ENCODE measurements at regions of chr6 and their contacts with region 1.

Region 1: DNA sequence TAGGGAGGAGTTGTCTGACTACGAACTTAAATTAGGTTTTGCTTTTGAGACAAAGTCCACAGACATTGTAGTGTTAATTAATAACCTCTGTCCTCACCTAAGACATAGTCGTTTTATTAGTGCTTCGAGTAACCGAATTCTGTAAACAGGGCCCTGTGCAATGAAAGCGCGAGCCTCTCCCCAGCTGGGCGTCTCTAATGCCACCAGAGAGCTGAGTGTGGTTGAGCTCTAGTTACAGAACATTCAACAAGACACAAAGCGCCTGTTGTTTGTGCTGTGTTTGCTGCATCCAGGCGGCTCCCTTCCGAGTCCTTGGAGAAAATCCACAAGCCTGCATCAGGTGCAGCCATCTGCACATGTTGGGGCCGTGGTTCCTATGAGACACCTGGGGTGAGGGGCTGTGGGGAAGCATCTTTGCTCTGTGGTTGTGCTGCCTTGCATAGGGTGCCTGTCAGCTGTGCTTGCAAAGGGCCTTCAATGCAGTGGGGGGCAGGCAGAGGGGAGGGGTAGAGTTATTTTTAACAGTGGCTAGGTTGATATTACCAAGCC is 63.9 kb downstream of the CD164 start:
- DNase-seq: no peak
- H3K4me3 ChIP-seq: no peak overlapping the region
- H3K27ac ChIP-seq: no peak overlapping the region
- H3K4me1 ChIP-seq: peaks cover 9% of the 10 kb centered on the region
- CTCF ChIP-seq: no peak

Region 2: DNA sequence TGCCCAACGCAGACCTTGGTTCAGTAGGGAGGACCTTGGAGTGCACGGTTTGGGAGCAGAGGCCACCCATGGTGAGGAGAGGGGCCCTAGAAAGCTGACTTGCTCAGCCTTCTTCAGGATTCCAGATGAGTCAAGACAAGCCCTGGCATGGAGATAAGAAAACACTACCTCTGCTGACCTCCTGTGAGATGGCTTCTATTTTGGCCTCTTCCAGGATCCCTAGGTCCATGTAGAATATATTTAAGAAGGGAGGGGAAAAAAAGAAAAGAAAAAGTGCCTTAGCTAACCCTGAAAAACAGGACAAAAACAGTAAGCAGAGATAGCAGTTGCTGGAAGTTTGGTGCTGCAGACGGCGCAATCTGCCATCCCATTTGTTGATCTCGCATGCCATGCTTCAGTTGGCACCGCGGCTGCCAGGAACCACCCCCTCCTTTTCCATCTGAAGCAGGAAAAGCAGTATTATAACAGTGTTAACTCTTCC is 370.2 kb before region 1 on chr6:
- CTCF ChIA-PET with region 1: no interaction called
- POLR2A ChIA-PET with region 1: no interaction called
- intact Hi-C with region 1: no loop called
- DNase-seq: no peak
- H3K4me3 ChIP-seq: no peak overlapping the region
- H3K27ac ChIP-seq: no peak overlapping the region
- H3K4me1 ChIP-seq: peaks cover 12% of the 10 kb centered on the region
- CTCF ChIP-seq: no peak

Region 3: DNA sequence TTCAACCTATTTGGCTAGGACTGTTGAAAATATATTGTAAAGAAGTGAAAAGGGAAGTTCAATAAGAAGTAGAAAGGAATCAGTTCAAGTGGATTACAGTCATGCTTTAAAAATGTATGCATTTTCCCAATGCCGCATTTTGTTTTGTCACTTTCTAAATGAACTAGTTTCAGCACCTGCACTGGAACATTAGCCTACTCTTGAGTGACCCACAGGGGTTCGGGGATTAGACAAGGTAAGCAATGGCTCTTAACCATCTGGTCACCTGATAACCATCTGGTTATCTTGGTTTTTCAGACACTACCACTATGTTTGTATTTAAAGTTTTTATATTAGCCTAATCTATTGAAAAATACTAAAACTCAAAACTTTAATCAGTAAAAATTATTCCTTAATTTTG is 33.7 kb before region 1 on chr6:
- CTCF ChIA-PET with region 1: no interaction called
- POLR2A ChIA-PET with region 1: interaction called, 3 read pairs
- intact Hi-C with region 1: loop called (anchors 5 kb)
- DNase-seq: no peak
- H3K4me3 ChIP-seq: no peak overlapping the region
- H3K27ac ChIP-seq: no peak overlapping the region
- H3K4me1 ChIP-seq: no peaks in the 10 kb centered on the region
- CTCF ChIP-seq: no peak